ENCODE measurements at regions of chr11 and their contacts with region 1.

Region 1: GRCh38 chr11:85627998-85628770 is at the start of gene TMEM126B:
- DNase-seq: peak; percentile 99
- ATAC-seq: peak; percentile 99
- total RNA-seq, gene TMEM126B: 61.6 TPM

Region 2: DNA sequence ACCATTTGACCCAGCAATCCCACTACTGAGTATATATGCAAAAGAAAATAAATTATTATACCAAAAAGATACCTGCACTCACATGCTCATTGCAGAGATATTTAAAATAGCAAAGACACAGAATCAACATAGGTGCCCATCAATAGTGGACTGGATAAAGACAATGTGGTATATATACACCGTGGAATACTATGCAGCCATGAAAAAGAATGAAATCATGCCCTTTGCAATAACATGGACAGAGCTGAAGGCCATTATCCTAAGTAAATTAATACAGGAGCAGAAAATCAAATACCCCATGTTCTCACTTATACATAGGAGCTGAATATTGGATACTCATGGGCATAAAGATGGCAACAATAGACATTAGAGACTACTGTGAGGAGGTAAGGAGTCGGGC is 69.8 kb before region 1 on chr11:
- intact Hi-C with region 1: no loop called
- DNase-seq: no peak
- ATAC-seq: no peak

Region 3: GRCh38 chr11:85664615-85665481 is 36.7 kb after region 1 on chr11 and contains the start of gene CREBZF:
- intact Hi-C with region 1: loop called (anchors 2 kb)
- DNase-seq: peak; percentile 95
- ATAC-seq: peak; percentile 98
- total RNA-seq, gene CREBZF: 11.2 TPM

Region 4: GRCh38 chr11:86244522-86245368 is 616.6 kb after region 1 on chr11 and contains the start of gene EED:
- intact Hi-C with region 1: loop called (anchors 10 kb)
- DNase-seq: peak; percentile 97
- ATAC-seq: peak; percentile 97
- total RNA-seq, gene EED: 13.2 TPM